ENCODE measurements at regions of chrX and their contacts with region 1.

Region 1: DNA sequence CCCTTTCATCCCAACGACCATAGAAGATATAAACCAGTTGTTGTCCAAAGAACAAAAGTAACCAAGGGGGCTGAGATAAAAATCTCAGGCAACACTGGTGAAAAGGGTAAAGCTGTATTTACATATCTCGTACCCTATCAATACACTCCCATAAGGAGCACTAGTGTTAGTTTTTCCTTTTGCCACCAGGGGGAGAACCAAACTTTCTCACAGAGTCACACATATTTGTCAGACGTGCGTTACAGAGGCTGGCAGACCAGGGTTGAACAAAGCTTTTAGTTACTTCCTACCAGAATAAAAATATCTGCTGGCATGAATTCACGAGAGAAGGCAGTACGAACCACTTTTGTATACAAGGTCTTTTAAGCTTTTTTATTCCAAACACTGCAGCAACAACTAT is 88.3 kb downstream of the AMELX start:
- DNase-seq: peak; percentile 17
- H3K4me3 ChIP-seq: no peak overlapping the region
- H3K27ac ChIP-seq: peak overlapping the region; percentile 12 to 42 (median 42)
- H3K4me1 ChIP-seq: peaks cover 0 to 8% (median 0%) of the 10 kb centered on the region in 4 donors
- H3K27me3 ChIP-seq: no peaks in the 10 kb centered on the region
- CTCF ChIP-seq: peak; percentile 35 to 57 (median 48)
- EP300 ChIP-seq: no peak
- POLR2A ChIP-seq: no peak

Region 2: DNA sequence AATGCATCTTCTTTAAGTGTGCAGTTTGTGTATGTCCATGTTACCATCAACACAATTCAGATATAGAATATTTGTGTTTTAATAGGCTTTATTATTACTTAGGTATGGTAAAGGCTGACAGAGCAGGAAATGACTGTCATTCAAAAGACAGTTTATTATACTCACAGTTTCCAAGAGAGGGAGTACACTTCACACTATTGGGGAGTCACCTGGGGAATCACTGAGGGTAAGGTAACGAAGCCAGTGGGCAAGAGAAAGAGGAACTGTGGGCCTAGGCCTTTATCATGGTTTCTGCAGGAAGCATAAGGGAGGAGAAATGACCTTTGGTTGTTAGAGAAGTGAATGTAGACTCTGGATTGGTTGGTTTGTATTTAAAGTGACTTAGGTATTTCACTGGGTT is 505.5 kb before region 1 on chrX:
- in situ Hi-C with region 1: no loop called
- intact Hi-C with region 1: no loop called
- DNase-seq: no peak
- H3K4me3 ChIP-seq: no peak overlapping the region
- H3K27ac ChIP-seq: no peak overlapping the region
- H3K4me1 ChIP-seq: no peaks in the 10 kb centered on the region
- H3K27me3 ChIP-seq: no peaks in the 10 kb centered on the region
- CTCF ChIP-seq: no peak
- EP300 ChIP-seq: no peak
- POLR2A ChIP-seq: no peak

Region 3: GRCh38 chrX:11151799-11152559 is 229.5 kb before region 1 on chrX:
- in situ Hi-C with region 1: loop called in 1 of 4 experiments (anchors 25 kb)
- intact Hi-C with region 1: no loop called
- DNase-seq: no peak
- H3K4me3 ChIP-seq: no peak overlapping the region
- H3K27ac ChIP-seq: no peak overlapping the region
- H3K4me1 ChIP-seq: peaks cover 0 to 9% (median 0%) of the 10 kb centered on the region in 4 donors
- H3K27me3 ChIP-seq: no peaks in the 10 kb centered on the region
- CTCF ChIP-seq: no peak
- EP300 ChIP-seq: no peak
- POLR2A ChIP-seq: no peak

Region 4: DNA sequence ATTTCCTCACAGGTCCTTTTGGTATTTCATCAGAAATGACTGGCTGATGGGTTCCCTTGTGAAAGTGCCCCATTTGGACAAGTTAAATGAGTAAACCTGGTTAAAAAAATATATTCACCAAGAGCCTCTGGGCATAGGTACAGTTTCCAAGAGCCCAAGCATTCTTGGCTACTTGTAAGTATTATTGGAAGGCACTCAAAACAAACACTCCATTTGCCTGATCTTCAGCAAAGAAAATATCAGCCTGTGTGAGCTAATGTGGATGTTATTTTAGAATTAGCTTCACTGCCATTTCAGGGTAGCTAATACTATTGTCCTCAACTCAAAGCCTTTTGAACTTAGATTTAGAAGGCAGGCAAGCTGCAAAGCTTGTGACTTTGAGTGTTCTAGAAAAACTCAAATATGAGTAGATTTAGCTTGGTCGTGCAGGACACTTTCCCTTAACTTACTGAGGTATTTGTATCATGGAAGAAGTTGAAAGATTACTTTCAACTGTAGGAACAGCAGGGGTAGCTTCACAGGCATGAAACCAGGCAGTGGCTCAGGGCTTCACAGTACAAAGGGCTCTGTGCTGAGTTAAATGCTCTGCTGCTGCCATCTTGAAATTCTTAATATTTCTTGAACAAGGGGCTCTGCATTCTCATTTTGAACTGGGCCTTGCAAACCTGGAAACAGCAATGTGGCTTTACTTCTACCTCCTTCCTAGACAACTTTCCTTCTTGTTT is 88.9 kb after region 1 on chrX:
- in situ Hi-C with region 1: no loop called
- intact Hi-C with region 1: no loop called
- DNase-seq: no peak
- H3K4me3 ChIP-seq: no peak overlapping the region
- H3K27ac ChIP-seq: peak overlapping the region in 3 of 4 donors; percentile 6 to 28 (median 26)
- H3K4me1 ChIP-seq: no peaks in the 10 kb centered on the region
- H3K27me3 ChIP-seq: no peaks in the 10 kb centered on the region
- CTCF ChIP-seq: no peak
- EP300 ChIP-seq: no peak
- POLR2A ChIP-seq: no peak

Measured in transverse colon (tissue), 4 donors.